Activated CD8-positive, alpha-beta T cell treated with anti-CD3 and anti-CD28 coated beads for 36 hours (primary cell): ENCODE measurements at regions of chr4 and their contacts with region 1.

Region 1: GRCh38 chr4:4541661-4542570 is at the start of gene STX18:
- DNase-seq: peak; percentile 87
- ATAC-seq: peak; percentile 89
- H3K4me3 Mint-ChIP-seq: peak within 1 kb of the TSS; percentile 96
- H3K27ac Mint-ChIP-seq: peak within 1 kb of the TSS; percentile 96
- H3K4me1 Mint-ChIP-seq: peaks cover 47% of the 10 kb centered on the region
- H3K27me3 Mint-ChIP-seq: no peaks in the 10 kb centered on the region
- CTCF ChIP-seq: no peak
- total RNA-seq, gene STX18: 19.5 to 20.0 TPM

Region 2: DNA sequence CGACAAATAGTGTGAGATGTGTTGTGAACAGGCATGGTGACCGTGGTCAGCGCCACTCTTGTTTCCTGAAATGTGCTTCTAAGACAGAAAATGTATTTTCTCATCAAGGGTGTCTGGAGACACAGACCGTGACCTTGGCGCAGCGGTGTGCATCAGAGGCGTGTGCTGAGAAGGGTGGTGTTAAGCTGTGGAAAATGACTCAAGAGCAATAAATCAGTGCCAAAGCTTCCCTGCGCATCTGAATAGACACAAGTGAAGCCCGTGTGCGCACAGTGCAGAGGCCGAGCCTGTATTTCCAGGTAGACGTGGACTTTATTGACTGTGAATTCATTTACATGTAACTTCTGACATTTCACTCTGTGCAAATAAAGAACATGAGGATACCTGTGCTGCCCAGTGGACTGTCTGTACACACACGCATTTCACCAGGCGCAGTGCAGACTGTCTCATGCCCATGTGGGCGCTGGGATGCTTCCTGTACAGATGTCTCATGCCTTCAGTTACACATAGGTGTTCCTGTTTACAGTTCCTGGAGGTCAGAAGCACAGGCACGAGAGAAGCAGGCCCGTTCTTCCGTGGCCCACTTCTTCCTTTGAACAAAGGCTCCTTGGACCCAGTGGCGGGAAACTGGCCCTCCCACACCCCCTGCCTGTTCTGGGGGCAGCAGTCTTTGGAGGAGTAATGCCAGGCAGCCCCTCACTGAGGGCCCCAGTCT is 123.1 kb before region 1 on chr4:
- CTCF ChIA-PET with region 1: no interaction called
- POLR2A ChIA-PET with region 1: no interaction called
- intact Hi-C with region 1: no loop called
- DNase-seq: peak; percentile 30
- ATAC-seq: peak; percentile 77
- H3K4me3 Mint-ChIP-seq: no peak overlapping the region
- H3K27ac Mint-ChIP-seq: peak overlapping the region; percentile 54
- H3K4me1 Mint-ChIP-seq: peaks cover 29% of the 10 kb centered on the region
- H3K27me3 Mint-ChIP-seq: no peaks in the 10 kb centered on the region
- CTCF ChIP-seq: no peak

Region 3: GRCh38 chr4:4524364-4524763 is 17.6 kb before region 1 on chr4:
- CTCF ChIA-PET with region 1: interaction called, 16 read pairs
- POLR2A ChIA-PET with region 1: interaction called, 12 read pairs
- intact Hi-C with region 1: no loop called
- DNase-seq: peak; percentile 61
- ATAC-seq: peak; percentile 100
- H3K4me3 Mint-ChIP-seq: no peak overlapping the region
- H3K27ac Mint-ChIP-seq: peak overlapping the region; percentile 17
- H3K4me1 Mint-ChIP-seq: peaks cover 41% of the 10 kb centered on the region
- H3K27me3 Mint-ChIP-seq: no peaks in the 10 kb centered on the region
- CTCF ChIP-seq: peak; percentile 23

Region 4: GRCh38 chr4:4569028-4569427 is 27.1 kb after region 1 on chr4:
- CTCF ChIA-PET with region 1: interaction called, 7 read pairs
- POLR2A ChIA-PET with region 1: interaction called, 7 read pairs
- intact Hi-C with region 1: loop called (anchors 1 kb)
- DNase-seq: no peak
- ATAC-seq: no peak
- H3K4me3 Mint-ChIP-seq: no peak overlapping the region
- H3K27ac Mint-ChIP-seq: no peak overlapping the region
- H3K4me1 Mint-ChIP-seq: no peaks in the 10 kb centered on the region
- H3K27me3 Mint-ChIP-seq: no peaks in the 10 kb centered on the region
- CTCF ChIP-seq: no peak